Activated CD8-positive, alpha-beta T cell treated with anti-CD3 and anti-CD28 coated beads, Interleukin-2, amount 10 ng/mL, durations not matched to agents 7 days and 5 days (primary cell): ENCODE measurements at regions of chrX and their contacts with region 1.

Region 1: DNA sequence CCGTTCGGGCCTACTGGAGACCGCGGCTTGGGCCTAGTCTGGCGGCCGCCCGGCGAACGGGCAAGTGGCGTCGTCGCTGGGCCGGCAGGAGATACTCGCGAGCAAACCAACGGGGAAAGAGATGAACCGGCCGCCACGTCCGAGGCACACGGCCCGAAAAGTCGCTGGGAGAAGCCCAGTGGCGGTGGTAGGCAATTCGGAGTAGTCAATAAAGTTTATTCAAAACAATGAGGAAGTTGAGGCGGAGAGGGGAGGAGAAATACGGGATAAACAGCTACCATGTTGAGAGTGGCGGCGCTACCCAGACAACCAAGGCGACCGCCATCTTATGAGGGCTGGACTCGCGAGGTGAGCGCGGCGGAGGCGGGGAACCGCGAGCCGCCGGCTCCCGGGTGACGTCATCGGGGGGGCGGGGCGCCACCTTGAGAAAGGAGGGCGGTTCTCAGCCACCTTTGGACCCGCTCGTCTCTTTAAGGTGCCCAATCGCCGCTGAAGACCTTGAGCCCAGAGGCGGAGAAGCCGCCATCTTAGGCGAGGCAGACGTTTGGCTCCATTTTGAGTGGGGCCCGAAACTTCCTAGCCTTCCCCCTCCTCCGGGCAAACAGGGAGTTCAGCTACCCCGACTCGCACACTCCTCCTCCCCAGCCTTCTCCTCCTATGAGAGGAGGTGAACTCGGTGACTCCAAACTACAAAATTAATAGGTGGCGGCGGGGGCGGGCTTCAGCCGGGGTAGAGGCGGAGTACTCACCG is at the start of gene PHF8:
- DNase-seq: peak; percentile 94
- ATAC-seq: peak; percentile 90
- H3K4me3 Mint-ChIP-seq: peak within 1 kb of the TSS; percentile 95
- H3K27ac Mint-ChIP-seq: peak within 1 kb of the TSS; percentile 97
- H3K4me1 Mint-ChIP-seq: peaks cover 18% of the 10 kb centered on the region
- H3K27me3 Mint-ChIP-seq: no peaks in the 10 kb centered on the region
- total RNA-seq, gene PHF8: 37.4 to 38.8 TPM

Region 2: GRCh38 chrX:54030329-54030728 is 14.0 kb before region 1 on chrX:
- CTCF ChIA-PET with region 1: interaction called, 11 read pairs
- POLR2A ChIA-PET with region 1: interaction called, 3 read pairs
- DNase-seq: no peak
- ATAC-seq: no peak
- H3K4me3 Mint-ChIP-seq: no peak overlapping the region
- H3K27ac Mint-ChIP-seq: no peak overlapping the region
- H3K4me1 Mint-ChIP-seq: peaks cover 4% of the 10 kb centered on the region
- H3K27me3 Mint-ChIP-seq: no peaks in the 10 kb centered on the region

Region 3: DNA sequence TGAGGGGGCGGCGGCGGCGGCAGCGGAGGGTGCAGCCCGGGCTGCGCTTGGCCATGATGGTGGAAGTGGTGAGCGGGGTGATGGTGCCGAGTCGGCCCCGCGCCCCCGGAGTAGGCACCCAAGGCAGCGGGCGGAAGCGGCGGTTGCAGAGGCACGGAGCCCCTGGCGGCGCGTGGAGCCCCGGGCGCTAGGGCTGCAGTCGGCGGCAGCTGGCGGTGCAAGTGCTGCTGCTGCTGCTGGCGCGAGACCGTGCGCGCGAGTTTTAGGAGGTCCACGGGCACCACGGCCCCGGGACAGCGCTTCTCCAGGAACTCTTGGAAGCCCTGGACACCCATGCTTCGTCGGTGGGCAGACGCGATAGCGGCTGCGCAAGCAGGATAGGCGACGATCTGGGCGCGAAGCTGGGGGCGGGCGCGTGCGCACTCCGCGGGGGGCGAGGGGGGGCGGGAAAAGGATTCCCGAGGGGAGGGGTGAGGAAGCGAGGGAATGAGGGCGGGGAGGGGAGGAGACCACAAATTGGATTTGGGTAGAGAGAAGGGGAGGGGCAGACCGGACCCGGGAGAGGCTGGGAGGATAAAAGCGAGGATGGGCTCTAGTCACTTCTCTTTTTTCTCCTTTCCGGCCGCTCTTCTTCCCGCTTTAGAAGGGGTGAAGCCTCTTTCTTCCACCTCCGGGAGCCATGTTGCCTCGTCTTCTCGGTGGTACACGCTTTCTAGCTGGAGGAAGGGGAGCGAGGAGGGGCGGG is 138.7 kb after region 1 on chrX and contains the start of gene FAM120C:
- CTCF ChIA-PET with region 1: interaction called, 3 read pairs
- POLR2A ChIA-PET with region 1: interaction called, 27 read pairs
- DNase-seq: peak; percentile 68
- ATAC-seq: peak; percentile 74
- H3K4me3 Mint-ChIP-seq: peak within 1 kb of the TSS; percentile 71
- H3K27ac Mint-ChIP-seq: peak within 1 kb of the TSS; percentile 88
- H3K4me1 Mint-ChIP-seq: peaks cover 40% of the 10 kb centered on the region
- H3K27me3 Mint-ChIP-seq: no peaks in the 10 kb centered on the region
- total RNA-seq, gene FAM120C: 10.1 to 10.3 TPM